A673 (cell line): ENCODE measurements at regions of chr5 and their contacts with region 1.

Region 1: DNA sequence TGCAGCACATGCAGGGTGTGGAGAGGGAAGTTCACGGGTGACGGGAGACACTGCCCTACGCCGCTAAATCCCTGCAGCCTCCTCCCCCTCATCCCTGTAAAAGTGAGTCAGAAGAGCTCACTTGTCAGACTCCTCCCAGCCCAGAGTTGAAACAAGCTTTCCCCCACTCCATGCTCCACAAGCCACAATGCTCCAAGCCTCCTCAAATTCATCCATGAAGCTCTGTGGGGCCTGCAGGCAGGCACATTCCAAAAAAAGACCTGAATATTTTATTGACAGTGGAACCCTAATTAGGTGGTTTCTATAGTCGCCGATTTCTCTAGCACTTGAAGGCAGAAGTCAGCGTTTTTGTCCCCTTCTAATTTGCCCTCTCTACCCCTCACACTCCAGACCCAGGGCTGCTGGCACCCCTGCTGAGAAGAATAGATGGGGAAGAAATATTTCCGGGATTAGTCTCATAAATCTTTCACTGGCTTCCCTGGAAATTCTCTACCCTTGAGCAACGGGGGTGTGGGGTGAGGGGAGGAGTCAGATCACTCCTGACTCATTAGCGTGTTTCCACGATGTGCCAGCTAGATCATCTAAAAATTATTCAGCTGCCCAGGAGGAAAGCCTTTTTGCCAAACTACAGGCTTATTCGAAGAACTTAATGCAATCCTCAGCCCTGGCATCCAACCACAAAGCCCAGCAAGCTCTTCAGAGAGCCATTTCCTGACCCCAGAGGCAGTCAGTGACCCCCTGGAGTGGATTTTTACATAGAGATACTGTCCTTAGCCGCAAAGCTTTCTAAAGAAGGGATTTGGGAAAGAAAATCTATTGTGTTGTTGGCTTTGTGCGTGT is 97.2 kb downstream of the ENC1 start:
- DNase-seq: peak; percentile 99
- H3K4me3 ChIP-seq: peak overlapping the region; percentile 8
- H3K27ac ChIP-seq: peak overlapping the region; percentile 38
- H3K4me1 ChIP-seq: peaks cover 45% of the 10 kb centered on the region
- H3K27me3 ChIP-seq: no peaks in the 10 kb centered on the region
- CTCF ChIP-seq: no peak

Region 2: GRCh38 chr5:72955768-72956323 is 1587.5 kb before region 1 on chr5 and contains the start of gene FCHO2:
- CTCF ChIA-PET with region 1: no interaction called
- POLR2A ChIA-PET with region 1: no interaction called
- intact Hi-C with region 1: no loop called
- DNase-seq: peak; percentile 96
- H3K4me3 ChIP-seq: peak within 1 kb of the TSS; percentile 72
- H3K27ac ChIP-seq: peak within 1 kb of the TSS; percentile 54
- H3K4me1 ChIP-seq: peaks cover 5% of the 10 kb centered on the region
- H3K27me3 ChIP-seq: peaks cover 37% of the 10 kb centered on the region
- CTCF ChIP-seq: peak; percentile 85
- total RNA-seq, gene FCHO2: 2.5 and 5.8 TPM in 2 replicates

Region 3: DNA sequence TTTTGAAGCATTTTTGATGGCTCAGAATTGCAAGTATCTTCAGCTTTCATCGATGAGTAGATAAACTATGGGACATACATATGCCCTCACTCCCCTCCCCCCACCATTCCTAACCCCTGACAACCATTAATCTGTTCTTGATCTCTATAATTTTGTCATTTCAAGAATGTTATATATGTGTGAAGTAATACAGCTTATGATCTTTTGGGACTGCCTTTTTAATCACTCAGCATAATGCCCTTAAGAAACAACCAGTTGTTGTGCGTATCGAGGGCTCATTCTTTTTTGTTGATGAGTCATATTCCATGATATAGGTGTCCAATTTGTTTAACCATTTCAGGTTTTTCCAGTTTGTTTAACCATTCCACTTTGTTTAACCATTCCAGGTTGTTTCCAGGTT is 841.9 kb before region 1 on chr5:
- CTCF ChIA-PET with region 1: no interaction called
- POLR2A ChIA-PET with region 1: interaction called, 10 read pairs
- intact Hi-C with region 1: no loop called
- DNase-seq: no peak
- H3K4me3 ChIP-seq: no peak overlapping the region
- H3K27ac ChIP-seq: no peak overlapping the region
- H3K4me1 ChIP-seq: no peaks in the 10 kb centered on the region
- H3K27me3 ChIP-seq: no peaks in the 10 kb centered on the region
- CTCF ChIP-seq: no peak

Region 4: GRCh38 chr5:74201334-74202081 is 341.9 kb before region 1 on chr5:
- CTCF ChIA-PET with region 1: no interaction called
- POLR2A ChIA-PET with region 1: interaction called, 11 read pairs
- intact Hi-C with region 1: no loop called
- DNase-seq: peak; percentile 65
- H3K4me3 ChIP-seq: no peak overlapping the region
- H3K27ac ChIP-seq: no peak overlapping the region
- H3K4me1 ChIP-seq: peaks cover 7% of the 10 kb centered on the region
- H3K27me3 ChIP-seq: no peaks in the 10 kb centered on the region
- CTCF ChIP-seq: no peak

Region 5: GRCh38 chr5:74226716-74227485 is 316.5 kb before region 1 on chr5:
- CTCF ChIA-PET with region 1: no interaction called
- POLR2A ChIA-PET with region 1: no interaction called
- intact Hi-C with region 1: no loop called
- DNase-seq: no peak
- H3K4me3 ChIP-seq: no peak overlapping the region
- H3K27ac ChIP-seq: no peak overlapping the region
- H3K4me1 ChIP-seq: no peaks in the 10 kb centered on the region
- H3K27me3 ChIP-seq: peaks cover 23% of the 10 kb centered on the region
- CTCF ChIP-seq: no peak

Region 6: DNA sequence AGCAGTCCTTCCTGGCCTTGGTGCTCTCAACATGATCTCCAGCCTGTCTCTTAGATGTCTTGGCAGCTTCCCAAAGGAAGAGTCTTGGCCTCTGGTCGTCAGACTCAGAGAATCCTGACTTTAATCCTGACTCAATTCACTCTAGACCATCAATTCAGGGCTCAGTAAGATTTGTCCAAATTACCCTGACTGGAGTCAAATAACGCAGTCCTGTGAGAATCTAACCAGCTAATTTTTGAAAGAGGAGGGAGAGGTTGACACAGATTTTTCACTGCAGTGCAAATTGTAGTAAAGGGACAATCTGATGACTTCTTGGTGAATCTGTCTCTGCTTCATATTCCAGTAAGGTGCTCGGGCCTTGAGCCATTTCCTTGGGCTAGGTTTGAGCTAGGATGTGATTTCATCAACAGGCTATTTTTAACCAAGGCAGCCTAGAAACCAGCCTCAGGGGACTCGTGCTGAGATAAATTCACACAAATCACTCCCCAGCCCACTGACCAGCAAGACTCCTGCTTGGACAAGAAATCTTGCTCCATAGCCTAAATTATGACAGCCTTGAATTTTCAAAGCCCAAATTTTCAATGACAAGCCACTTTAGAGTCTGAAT is 160.3 kb before region 1 on chr5:
- CTCF ChIA-PET with region 1: no interaction called
- POLR2A ChIA-PET with region 1: no interaction called
- intact Hi-C with region 1: loop called (anchors 10 kb)
- DNase-seq: peak; percentile 52
- H3K4me3 ChIP-seq: no peak overlapping the region
- H3K27ac ChIP-seq: no peak overlapping the region
- H3K4me1 ChIP-seq: peaks cover 40% of the 10 kb centered on the region
- H3K27me3 ChIP-seq: peaks cover 3% of the 10 kb centered on the region
- CTCF ChIP-seq: no peak

Region 7: GRCh38 chr5:74433255-74433895 is 110.0 kb before region 1 on chr5:
- CTCF ChIA-PET with region 1: no interaction called
- POLR2A ChIA-PET with region 1: no interaction called
- intact Hi-C with region 1: loop called (anchors 5 kb)
- DNase-seq: peak; percentile 91
- H3K4me3 ChIP-seq: peak overlapping the region; percentile 8
- H3K27ac ChIP-seq: peak overlapping the region; percentile 59
- H3K4me1 ChIP-seq: peaks cover 30% of the 10 kb centered on the region
- H3K27me3 ChIP-seq: no peaks in the 10 kb centered on the region
- CTCF ChIP-seq: no peak

Region 8: GRCh38 chr5:74595143-74595925 is 52.0 kb after region 1 on chr5:
- CTCF ChIA-PET with region 1: no interaction called
- POLR2A ChIA-PET with region 1: no interaction called
- intact Hi-C with region 1: no loop called
- DNase-seq: no peak
- H3K4me3 ChIP-seq: no peak overlapping the region
- H3K27ac ChIP-seq: no peak overlapping the region
- H3K4me1 ChIP-seq: no peaks in the 10 kb centered on the region
- H3K27me3 ChIP-seq: no peaks in the 10 kb centered on the region
- CTCF ChIP-seq: no peak

Region 9: GRCh38 chr5:74631081-74631953 is 87.9 kb after region 1 on chr5:
- CTCF ChIA-PET with region 1: no interaction called
- POLR2A ChIA-PET with region 1: no interaction called
- intact Hi-C with region 1: loop called (anchors 1 kb)
- DNase-seq: peak; percentile 62
- H3K4me3 ChIP-seq: no peak overlapping the region
- H3K27ac ChIP-seq: peak overlapping the region; percentile 56
- H3K4me1 ChIP-seq: peaks cover 32% of the 10 kb centered on the region
- H3K27me3 ChIP-seq: no peaks in the 10 kb centered on the region
- CTCF ChIP-seq: no peak

Region 10: GRCh38 chr5:74798977-74799911 is 255.9 kb after region 1 on chr5:
- CTCF ChIA-PET with region 1: no interaction called
- POLR2A ChIA-PET with region 1: no interaction called
- intact Hi-C with region 1: no loop called
- DNase-seq: no peak
- H3K4me3 ChIP-seq: no peak overlapping the region
- H3K27ac ChIP-seq: no peak overlapping the region
- H3K4me1 ChIP-seq: no peaks in the 10 kb centered on the region
- H3K27me3 ChIP-seq: no peaks in the 10 kb centered on the region
- CTCF ChIP-seq: no peak